ENCODE measurements at regions of chr15 and their contacts with region 1.

Region 1: GRCh38 chr15:34914317-34914716 is 55.2 kb downstream of the AQR start:
- DNase-seq: no peak
- ATAC-seq: no peak
- H3K4me3 ChIP-seq: no peak overlapping the region
- H3K4me1 ChIP-seq: no peaks in the 10 kb centered on the region
- CTCF ChIP-seq: no peak

Region 2: DNA sequence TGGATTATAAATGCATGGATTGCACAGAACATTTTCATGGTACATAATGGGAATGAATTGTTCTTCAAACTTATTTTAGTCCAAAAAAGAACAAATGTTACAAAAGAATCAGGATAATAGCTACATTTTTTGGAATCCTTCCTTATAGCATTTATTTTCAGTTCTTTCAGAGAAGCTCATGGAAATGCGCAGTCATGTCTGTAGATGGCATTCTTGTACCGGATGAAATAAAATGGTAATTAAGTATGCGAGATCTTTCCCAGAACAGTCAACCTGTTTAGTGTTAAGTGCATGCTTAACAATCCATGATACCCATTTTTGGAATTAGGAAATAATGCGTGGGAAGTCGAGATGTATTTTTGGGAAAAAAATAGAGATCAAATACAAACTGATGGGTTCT is 292.6 kb before region 1 on chr15:
- intact Hi-C with region 1: loop called in 1 of 2 experiments (anchors 10 kb)
- DNase-seq: no peak
- ATAC-seq: no peak
- H3K4me3 ChIP-seq: no peak overlapping the region
- H3K4me1 ChIP-seq: no peaks in the 10 kb centered on the region
- CTCF ChIP-seq: no peak

Region 3: DNA sequence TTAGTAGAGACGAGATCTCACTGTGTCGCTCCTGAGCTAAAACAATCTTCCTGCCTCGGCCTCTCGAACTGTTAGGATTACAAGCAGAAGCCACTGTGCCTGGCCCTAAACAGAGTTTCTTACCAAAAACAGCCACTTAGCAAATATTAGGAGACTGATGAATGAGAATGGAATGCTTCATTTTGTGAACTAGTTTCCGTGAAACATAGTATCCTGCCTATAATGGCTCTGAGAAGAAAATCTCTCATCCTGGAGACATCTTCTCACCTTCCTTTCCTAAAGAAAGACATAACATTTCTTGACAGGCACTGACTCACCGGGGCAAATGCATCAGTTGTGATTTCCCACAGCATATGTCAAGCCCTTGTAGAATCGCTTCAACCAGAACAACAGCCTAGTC is 204.5 kb before region 1 on chr15:
- intact Hi-C with region 1: loop called in 1 of 2 experiments (anchors 10 kb)
- DNase-seq: no peak
- ATAC-seq: no peak
- H3K4me3 ChIP-seq: no peak overlapping the region
- H3K4me1 ChIP-seq: no peaks in the 10 kb centered on the region
- CTCF ChIP-seq: no peak